ENCODE measurements at regions of chr17 and their contacts with region 1.

Region 1: GRCh38 chr17:75405365-75406221 is at the start of gene GRB2:
- DNase-seq: peak; percentile 100
- H3K4me3 Mint-ChIP-seq: peak within 1 kb of the TSS; percentile 97
- H3K27ac Mint-ChIP-seq: peak within 1 kb of the TSS; percentile 97
- H3K4me1 Mint-ChIP-seq: peaks cover 47% of the 10 kb centered on the region
- H3K27me3 Mint-ChIP-seq: no peaks in the 10 kb centered on the region
- total RNA-seq, gene GRB2: 172 and 183 TPM in 2 replicates

Region 2: GRCh38 chr17:74987418-74987908 is 418.1 kb before region 1 on chr17 and contains the start of gene CDR2L:
- intact Hi-C with region 1: loop called (anchors 10 kb)
- DNase-seq: peak; percentile 89
- H3K4me3 Mint-ChIP-seq: peak within 1 kb of the TSS; percentile 83
- H3K27ac Mint-ChIP-seq: no peak within 1 kb of the TSS
- H3K4me1 Mint-ChIP-seq: peaks cover 7% of the 10 kb centered on the region
- H3K27me3 Mint-ChIP-seq: peaks cover 54% of the 10 kb centered on the region
- total RNA-seq, gene CDR2L: 1.1 and 1.3 TPM in 2 replicates

Region 3: DNA sequence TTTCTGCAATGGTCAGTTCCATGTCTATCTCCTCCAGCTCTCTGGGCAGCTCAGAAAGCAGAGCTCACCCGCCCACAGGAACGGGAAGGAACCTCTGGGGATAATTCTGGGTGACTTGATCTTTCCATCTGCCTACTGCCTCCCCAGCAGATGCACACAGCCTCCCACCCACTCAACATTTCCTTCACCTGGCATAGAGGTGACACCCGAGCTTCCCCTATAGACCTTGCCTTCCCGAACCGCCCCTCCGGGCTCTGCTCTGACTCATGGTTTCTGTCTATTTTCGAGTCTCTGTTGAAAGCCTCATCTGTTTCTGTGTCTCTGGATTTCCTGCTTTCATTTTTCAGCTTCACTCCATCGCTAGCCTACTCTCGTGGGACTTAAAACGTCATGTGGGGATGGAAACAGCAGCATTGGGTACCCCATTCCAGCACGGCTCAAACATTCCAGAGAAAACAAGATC is 155.6 kb before region 1 on chr17:
- intact Hi-C with region 1: loop called (anchors 1 kb)
- DNase-seq: peak; percentile 64
- H3K4me3 Mint-ChIP-seq: peak overlapping the region; percentile 77
- H3K27ac Mint-ChIP-seq: peak overlapping the region; percentile 92
- H3K4me1 Mint-ChIP-seq: peaks cover 63% of the 10 kb centered on the region
- H3K27me3 Mint-ChIP-seq: no peaks in the 10 kb centered on the region

Region 4: GRCh38 chr17:75295201-75296158 is 110.1 kb before region 1 on chr17:
- intact Hi-C with region 1: loop called (anchors 1 kb)
- DNase-seq: peak; percentile 49
- H3K4me3 Mint-ChIP-seq: peak overlapping the region; percentile 49
- H3K27ac Mint-ChIP-seq: peak overlapping the region; percentile 96
- H3K4me1 Mint-ChIP-seq: peaks cover 24% of the 10 kb centered on the region
- H3K27me3 Mint-ChIP-seq: no peaks in the 10 kb centered on the region

Region 5: DNA sequence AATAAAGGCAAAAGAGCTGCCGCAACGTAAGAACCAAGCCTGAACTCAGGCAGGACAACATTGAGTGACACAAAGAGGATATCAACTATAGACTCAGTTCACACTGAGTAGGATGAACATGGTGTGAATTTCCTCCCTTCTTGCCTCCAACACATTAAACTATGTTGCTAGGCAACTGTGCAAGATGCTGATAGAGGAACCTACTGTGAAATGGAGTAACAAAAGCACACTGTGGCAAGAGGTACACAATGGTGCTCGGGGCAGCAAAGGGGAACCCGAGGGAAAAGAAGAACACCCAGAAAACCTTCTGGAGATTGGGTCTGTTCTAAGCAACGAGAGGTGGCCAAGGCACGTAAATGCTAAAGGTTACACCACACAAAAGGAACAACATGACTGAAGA is 34.3 kb before region 1 on chr17:
- intact Hi-C with region 1: loop called (anchors 2 kb)
- DNase-seq: no peak
- H3K4me3 Mint-ChIP-seq: peak overlapping the region; percentile 65
- H3K27ac Mint-ChIP-seq: peak overlapping the region; percentile 92
- H3K4me1 Mint-ChIP-seq: peaks cover 60% of the 10 kb centered on the region
- H3K27me3 Mint-ChIP-seq: no peaks in the 10 kb centered on the region

Region 6: DNA sequence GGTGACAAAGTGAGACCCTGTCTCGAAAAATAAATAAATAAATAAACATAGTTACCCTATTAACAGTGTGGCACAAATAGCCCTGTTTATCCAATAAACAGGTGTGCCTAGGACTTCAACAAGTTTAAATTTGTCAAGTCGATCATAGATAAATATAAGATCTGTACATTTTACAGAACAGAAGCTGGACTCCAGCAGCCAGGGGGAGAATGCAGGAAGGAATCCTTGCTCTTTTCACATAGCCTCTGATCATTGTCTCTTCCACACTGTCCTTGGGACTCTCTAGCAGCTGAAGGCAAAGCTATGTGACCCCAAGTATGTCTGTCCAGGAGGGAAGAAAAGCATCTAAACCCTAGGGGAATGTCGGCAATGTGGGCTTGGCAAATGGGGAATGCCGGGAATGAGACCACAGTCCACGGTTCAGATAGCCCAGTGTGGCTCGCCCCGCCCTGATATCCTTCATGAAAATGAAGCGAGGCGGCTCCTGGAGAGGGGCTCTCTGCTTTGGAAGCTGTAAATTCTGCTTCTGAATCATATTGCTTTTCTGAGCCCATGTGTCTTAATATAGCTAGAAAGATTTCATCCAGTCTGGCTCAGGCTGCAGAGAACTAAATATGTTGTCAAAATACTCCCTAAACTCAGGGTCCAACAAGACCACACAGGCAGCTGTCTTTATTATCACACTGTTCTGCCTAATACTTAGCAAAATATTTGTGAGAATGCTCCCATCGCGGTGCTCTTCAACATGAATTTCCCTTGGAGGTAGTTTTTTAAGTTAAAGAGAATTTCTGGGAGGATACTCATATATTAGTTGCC is 24.8 kb after region 1 on chr17:
- intact Hi-C with region 1: no loop called
- DNase-seq: no peak
- H3K4me3 Mint-ChIP-seq: no peak overlapping the region
- H3K27ac Mint-ChIP-seq: no peak overlapping the region
- H3K4me1 Mint-ChIP-seq: peaks cover 9% of the 10 kb centered on the region
- H3K27me3 Mint-ChIP-seq: peaks cover 20% of the 10 kb centered on the region

Region 7: GRCh38 chr17:75504347-75504964 is 98.9 kb after region 1 on chr17:
- intact Hi-C with region 1: no loop called
- DNase-seq: peak; percentile 19
- H3K4me3 Mint-ChIP-seq: no peak overlapping the region
- H3K27ac Mint-ChIP-seq: no peak overlapping the region
- H3K4me1 Mint-ChIP-seq: no peaks in the 10 kb centered on the region
- H3K27me3 Mint-ChIP-seq: peaks cover 1% of the 10 kb centered on the region

Region 8: DNA sequence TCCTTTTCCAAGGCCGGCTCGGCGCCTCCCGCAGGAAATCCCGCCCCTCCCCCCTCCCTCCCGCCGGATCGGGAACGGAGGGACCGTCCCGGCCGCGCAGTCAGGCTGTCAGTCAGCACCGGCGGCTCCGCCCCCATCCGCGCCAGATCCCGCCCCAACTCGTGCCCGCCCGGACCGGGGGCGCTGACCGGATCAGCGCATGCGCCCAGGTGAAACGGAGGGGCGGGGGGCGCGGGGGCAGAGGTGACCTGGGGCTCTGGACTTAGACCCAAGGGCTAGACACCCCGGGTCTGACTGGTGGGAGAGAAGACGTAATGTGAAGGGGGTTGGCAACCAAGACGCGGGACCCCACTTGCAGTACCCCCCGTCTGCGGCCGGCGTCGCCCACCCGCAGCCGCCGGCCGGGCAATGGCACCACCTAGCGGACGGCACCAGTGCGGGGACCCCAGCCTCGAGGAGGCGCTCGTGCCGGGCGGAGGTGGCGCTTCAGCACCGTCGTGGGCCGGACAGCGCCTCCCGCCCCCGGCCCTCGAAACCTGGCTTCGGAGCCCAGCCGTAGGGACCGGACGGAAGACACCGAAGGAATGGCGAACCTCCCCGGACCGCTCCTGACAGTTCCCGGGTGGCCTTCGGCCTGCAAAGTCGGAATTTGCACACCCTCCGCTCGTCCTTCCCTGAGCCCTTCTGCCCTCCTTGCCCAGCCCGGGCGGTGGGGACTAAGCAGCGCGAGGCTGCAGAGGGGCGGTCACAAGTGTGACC is 110.1 kb after region 1 on chr17 and contains the start of gene CASKIN2:
- intact Hi-C with region 1: loop called (anchors 1 kb)
- DNase-seq: peak; percentile 62
- H3K4me3 Mint-ChIP-seq: peak within 1 kb of the TSS; percentile 78
- H3K27ac Mint-ChIP-seq: no peak within 1 kb of the TSS
- H3K4me1 Mint-ChIP-seq: peaks cover 18% of the 10 kb centered on the region
- H3K27me3 Mint-ChIP-seq: peaks cover 17% of the 10 kb centered on the region
- total RNA-seq, gene CASKIN2: 0.88 and 2.0 TPM in 2 replicates